Activated naive CD4-positive, alpha-beta T cell treated with anti-CD3 and anti-CD28 coated beads for 36 hours (primary cell): ENCODE measurements at regions of chr5 and their contacts with region 1.

Region 1: GRCh38 chr5:6827526-6828219 is 114.4 kb downstream of the TENT4A start:
- DNase-seq: peak; percentile 59
- H3K4me3 Mint-ChIP-seq: peak overlapping the region; percentile 11
- H3K27ac Mint-ChIP-seq: no peak overlapping the region
- H3K4me1 Mint-ChIP-seq: peaks cover 31% of the 10 kb centered on the region
- H3K27me3 Mint-ChIP-seq: peaks cover 22% of the 10 kb centered on the region

Region 2: DNA sequence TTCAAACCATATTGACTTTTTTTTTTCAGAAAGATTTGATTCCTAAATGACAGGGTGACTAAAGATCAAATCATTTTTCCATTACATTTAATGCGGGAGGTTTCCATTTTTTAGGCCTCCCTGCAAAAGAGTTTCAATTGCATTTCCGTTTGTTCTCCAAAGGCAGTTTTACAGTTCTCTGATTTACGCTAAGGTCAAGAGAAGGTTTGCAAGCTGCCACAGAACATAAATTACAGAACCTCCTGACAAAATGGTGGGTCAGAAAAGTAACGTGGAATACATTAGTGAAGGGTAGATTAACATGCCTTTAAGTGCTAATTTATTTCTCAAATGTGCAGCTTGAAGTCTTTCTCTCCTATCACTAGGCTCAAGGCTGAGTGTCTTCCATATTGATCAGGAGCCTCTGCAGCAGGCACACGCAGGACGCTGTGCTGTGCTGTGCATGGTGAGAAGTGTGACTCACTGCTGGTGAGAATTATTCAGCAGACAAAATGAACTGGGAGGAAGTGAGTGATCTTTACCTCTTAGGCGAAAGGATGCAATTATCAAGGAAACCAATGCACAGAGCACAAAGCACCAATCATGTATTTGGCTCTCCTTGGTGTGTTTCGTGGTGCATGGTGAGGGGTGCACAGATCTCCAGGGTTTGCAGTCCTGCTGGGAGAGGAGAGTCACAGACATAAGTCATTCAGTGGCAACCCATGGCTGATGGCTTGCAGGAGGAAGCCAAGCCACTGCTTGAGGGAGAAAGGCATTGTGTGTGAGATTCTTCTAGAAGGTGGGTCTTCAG is 21.8 kb after region 1 on chr5:
- CTCF ChIA-PET with region 1: no interaction called
- intact Hi-C with region 1: loop called (anchors 1 kb)
- DNase-seq: peak; percentile 39
- H3K4me3 Mint-ChIP-seq: no peak overlapping the region
- H3K27ac Mint-ChIP-seq: no peak overlapping the region
- H3K4me1 Mint-ChIP-seq: peaks cover 7% of the 10 kb centered on the region
- H3K27me3 Mint-ChIP-seq: peaks cover 4% of the 10 kb centered on the region

Region 3: GRCh38 chr5:7868773-7869473 is 1041.2 kb after region 1 on chr5 and contains the starts of genes FASTKD3 and MTRR:
- CTCF ChIA-PET with region 1: no interaction called
- intact Hi-C with region 1: loop called (anchors 2 kb)
- DNase-seq: peak; percentile 91
- H3K4me3 Mint-ChIP-seq: peak within 1 kb of the TSS; percentile 96
- H3K27ac Mint-ChIP-seq: peak within 1 kb of the TSS; percentile 82
- H3K4me1 Mint-ChIP-seq: peaks cover 64% of the 10 kb centered on the region
- H3K27me3 Mint-ChIP-seq: no peaks in the 10 kb centered on the region
- total RNA-seq, gene FASTKD3: 4.0 to 7.7 TPM
- total RNA-seq, gene MTRR: 34.0 to 35.1 TPM

Region 4: DNA sequence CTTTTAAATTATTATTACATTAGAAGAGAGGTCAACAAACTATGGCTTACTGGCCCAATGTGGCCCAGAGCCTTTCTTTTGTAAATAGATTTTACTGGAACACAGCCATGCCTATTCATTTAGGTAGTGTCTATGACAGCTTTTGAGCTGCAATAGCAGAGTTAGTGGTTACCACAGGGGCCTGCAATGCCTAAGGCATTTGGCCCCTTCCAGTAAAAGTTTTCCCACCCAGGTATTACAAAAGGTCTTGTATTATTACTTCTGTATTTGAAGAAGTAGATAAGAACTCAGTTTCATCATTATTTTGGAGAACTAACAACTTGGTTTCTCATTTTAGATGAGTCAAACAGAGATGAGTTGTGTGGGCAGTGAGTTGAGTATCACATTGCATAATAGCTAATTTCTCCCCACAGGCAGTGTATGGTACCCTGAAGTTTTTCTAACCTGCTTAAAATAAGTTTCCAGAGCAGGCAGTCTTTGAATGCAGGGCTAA is 1050.8 kb after region 1 on chr5:
- CTCF ChIA-PET with region 1: no interaction called
- intact Hi-C with region 1: loop called (anchors 1 kb)
- DNase-seq: peak; percentile 28
- H3K4me3 Mint-ChIP-seq: no peak overlapping the region
- H3K27ac Mint-ChIP-seq: peak overlapping the region; percentile 48
- H3K4me1 Mint-ChIP-seq: peaks cover 48% of the 10 kb centered on the region
- H3K27me3 Mint-ChIP-seq: no peaks in the 10 kb centered on the region